Right ventricle myocardium superior (tissue), 1 donor: ENCODE measurements at regions of chr4 and their contacts with region 1.

Region 1: DNA sequence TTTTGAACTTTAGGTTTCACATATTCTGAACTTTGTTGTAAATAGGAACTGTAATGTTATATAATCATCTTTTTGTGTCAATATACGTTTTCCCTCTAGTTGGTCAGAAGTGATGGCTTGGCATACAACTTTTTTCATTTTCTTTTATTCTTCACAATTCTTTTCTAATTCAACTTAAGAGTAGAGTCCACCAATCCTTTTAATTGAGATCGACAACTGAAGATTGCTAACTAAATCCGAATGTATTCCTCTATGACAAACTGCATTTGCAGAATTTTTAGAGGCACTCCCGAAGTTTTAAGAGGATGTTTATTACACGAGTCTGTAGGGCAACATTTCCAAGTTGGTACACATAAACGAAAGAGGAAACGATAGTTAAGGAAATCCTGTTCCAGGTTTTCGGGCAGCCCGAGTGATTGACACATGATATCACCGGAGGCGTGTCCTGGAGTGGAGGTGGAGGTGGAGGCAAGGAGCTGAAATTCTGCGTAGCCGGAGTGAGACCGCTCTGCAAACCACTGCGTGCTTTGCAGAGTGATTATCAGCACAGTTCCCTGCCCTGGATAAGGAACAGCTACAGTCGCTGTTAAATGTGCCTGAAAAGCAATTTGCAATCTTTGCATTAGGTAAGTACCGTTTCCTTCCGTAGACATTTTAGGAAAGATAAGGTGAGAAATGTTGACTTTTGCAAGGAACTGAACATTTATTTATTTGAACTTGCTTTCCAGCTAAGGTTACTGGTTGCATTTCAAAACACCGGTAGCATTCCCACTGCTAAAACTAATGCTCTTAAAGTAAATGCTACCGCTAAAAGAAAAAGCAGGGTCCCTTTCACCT is at the start of gene SPRY1:
- DNase-seq: peak; percentile 89
- ATAC-seq: peak; percentile 86
- total RNA-seq, gene SPRY1: 37.3 TPM

Region 2: DNA sequence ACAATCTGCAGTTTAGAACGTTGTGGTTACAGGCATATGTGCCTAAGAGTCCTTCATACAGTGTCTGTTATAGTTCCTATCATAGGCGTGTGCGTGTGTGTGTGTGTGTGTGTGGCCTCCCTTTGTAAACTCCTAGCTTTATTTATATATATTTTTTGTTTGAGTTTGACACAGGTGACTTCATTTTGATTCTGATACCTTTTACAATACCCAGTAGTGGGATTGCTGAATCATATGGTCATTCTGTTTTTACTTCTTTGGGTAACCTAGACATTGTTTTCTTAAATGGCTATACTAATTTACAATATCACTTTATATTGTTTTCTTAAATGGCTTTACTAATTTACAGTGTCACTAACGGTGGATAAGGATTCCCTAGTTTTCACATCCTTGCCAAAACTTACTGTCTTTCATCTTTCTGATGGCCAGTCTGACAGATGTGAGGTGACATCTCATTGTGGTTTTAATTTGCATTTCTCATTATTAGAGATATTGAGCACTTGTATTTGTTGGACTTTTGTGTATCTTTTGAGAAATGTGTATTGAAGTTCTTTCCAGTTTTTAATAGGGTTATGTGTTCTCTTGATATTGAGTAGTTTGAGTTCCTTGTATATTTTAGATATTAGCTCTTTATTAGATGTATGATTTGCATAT is 263.0 kb before region 1 on chr4:
- intact Hi-C with region 1: loop called (anchors 10 kb)
- DNase-seq: no peak
- ATAC-seq: no peak

Region 3: GRCh38 chr4:123250843-123251242 is 145.7 kb before region 1 on chr4:
- intact Hi-C with region 1: loop called (anchors 10 kb)
- DNase-seq: peak; percentile 53
- ATAC-seq: peak; percentile 70

Region 4: GRCh38 chr4:123649645-123650391 is 253.3 kb after region 1 on chr4:
- intact Hi-C with region 1: loop called (anchors 10 kb)
- DNase-seq: no peak
- ATAC-seq: peak; percentile 78

Region 5: GRCh38 chr4:123750044-123750443 is 353.5 kb after region 1 on chr4:
- intact Hi-C with region 1: no loop called
- DNase-seq: no peak
- ATAC-seq: peak; percentile 32

Region 6: GRCh38 chr4:124111922-124112321 is 715.4 kb after region 1 on chr4:
- intact Hi-C with region 1: no loop called
- DNase-seq: no peak
- ATAC-seq: peak; percentile 96